PC-3 (cell line): ENCODE measurements at regions of chrX and their contacts with region 1.

Region 1: DNA sequence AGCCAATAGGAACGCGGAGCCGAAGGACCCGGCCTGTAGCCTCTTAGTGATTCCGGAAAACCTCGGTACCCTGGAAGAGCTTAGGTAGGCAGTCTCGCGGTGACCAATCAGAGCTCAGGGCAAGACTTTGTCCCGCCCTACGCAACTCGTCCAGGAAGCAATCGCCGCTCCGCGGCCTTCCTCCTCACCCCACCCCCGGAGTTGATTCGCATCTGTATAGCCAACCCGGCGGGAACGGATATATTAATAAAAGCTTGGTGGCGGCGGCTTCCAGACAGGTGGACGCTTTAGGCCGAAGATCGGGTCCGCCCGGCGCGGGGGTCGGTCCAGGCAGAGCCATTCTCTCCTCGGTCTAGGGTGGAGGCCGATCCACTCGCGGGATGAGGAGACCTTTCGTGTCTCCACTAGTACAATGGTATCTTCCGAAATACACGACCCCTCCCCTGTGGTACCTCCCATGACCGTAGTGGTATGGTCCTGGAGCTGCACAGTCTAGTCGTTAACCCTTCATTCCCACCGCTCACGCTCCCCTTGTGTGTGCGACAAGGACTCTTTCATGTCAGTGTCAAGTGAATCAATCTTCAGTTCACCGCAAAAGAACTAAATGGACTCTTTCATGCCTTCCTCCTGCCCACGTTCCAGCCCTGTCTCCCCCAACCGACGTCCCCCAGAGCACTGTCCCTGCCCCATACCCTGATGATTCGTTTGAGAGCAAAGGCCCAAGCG is 24.2 kb upstream of the GLOD5 start:
- DNase-seq: peak; percentile 97
- ATAC-seq: peak; percentile 99
- H3K4me3 ChIP-seq: peak overlapping the region; percentile 85
- H3K27ac ChIP-seq: peak overlapping the region; percentile 83
- H3K4me1 ChIP-seq: peaks cover 7% of the 10 kb centered on the region
- H3K27me3 ChIP-seq: no peaks in the 10 kb centered on the region
- CTCF ChIP-seq: no peak

Region 2: DNA sequence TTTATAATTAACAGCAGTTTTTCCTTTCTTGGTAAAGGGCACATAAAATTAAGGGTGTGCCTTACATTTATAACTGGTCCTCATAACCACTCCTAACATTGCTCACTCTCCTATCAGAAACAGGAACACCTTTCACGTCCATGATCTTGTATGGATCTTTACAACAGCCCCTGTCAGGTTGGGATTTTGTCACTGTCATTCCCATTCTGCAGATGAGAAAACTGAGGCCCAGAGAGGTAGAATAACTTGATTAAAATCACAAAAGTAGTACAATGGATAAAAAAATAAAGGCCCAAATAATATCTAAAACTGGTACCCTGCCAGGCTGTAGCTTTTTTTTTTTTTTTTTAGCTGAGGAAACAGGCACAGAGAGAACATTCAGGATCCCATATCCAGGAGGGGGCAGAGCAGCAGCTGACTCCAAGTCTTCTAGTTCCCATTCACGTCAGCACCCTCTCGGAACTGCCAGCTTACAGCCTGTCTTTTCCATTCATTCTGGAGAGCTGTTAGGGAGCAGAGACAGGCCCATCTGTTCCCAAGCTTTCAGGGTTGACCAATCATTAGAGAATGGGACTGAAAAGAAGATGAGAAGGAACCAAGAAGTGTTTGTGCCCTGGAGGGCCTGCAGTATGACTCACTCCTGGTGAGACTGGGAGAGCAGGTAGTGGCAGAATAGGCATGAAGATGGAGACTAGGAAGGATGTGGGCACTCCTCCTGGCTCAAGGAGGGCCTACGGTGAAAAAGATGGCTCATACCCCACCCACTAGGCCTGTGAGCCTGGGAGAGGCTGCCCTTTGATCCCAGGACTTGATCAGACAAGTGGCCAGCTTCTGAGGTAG is 33.5 kb before region 1 on chrX:
- CTCF ChIA-PET with region 1: no interaction called
- POLR2A ChIA-PET with region 1: interaction called, 10 read pairs
- intact Hi-C with region 1: no loop called
- DNase-seq: peak; percentile 90
- ATAC-seq: peak; percentile 93
- H3K4me3 ChIP-seq: no peak overlapping the region
- H3K27ac ChIP-seq: peak overlapping the region; percentile 79
- H3K4me1 ChIP-seq: peaks cover 20% of the 10 kb centered on the region
- H3K27me3 ChIP-seq: no peaks in the 10 kb centered on the region
- CTCF ChIP-seq: peak; percentile 45

Region 3: GRCh38 chrX:48789366-48790220 is 52.2 kb after region 1 on chrX:
- CTCF ChIA-PET with region 1: no interaction called
- POLR2A ChIA-PET with region 1: no interaction called
- intact Hi-C with region 1: no loop called
- DNase-seq: no peak
- ATAC-seq: no peak
- H3K4me3 ChIP-seq: no peak overlapping the region
- H3K27ac ChIP-seq: no peak overlapping the region
- H3K4me1 ChIP-seq: peaks cover under 1% of the 10 kb centered on the region
- H3K27me3 ChIP-seq: no peaks in the 10 kb centered on the region
- CTCF ChIP-seq: no peak

Region 4: GRCh38 chrX:48891402-48892288 is 154.3 kb after region 1 on chrX:
- CTCF ChIA-PET with region 1: no interaction called
- POLR2A ChIA-PET with region 1: no interaction called
- intact Hi-C with region 1: no loop called
- DNase-seq: peak; percentile 91
- ATAC-seq: peak; percentile 94
- H3K4me3 ChIP-seq: peak overlapping the region; percentile 64
- H3K27ac ChIP-seq: no peak overlapping the region
- H3K4me1 ChIP-seq: peaks cover 14% of the 10 kb centered on the region; the same call in 1 of the 2 replicates
- H3K27me3 ChIP-seq: no peaks in the 10 kb centered on the region
- CTCF ChIP-seq: peak; percentile 57